HepG2 (cell line): ENCODE measurements at regions of chr1 and their contacts with region 1.

Region 1: DNA sequence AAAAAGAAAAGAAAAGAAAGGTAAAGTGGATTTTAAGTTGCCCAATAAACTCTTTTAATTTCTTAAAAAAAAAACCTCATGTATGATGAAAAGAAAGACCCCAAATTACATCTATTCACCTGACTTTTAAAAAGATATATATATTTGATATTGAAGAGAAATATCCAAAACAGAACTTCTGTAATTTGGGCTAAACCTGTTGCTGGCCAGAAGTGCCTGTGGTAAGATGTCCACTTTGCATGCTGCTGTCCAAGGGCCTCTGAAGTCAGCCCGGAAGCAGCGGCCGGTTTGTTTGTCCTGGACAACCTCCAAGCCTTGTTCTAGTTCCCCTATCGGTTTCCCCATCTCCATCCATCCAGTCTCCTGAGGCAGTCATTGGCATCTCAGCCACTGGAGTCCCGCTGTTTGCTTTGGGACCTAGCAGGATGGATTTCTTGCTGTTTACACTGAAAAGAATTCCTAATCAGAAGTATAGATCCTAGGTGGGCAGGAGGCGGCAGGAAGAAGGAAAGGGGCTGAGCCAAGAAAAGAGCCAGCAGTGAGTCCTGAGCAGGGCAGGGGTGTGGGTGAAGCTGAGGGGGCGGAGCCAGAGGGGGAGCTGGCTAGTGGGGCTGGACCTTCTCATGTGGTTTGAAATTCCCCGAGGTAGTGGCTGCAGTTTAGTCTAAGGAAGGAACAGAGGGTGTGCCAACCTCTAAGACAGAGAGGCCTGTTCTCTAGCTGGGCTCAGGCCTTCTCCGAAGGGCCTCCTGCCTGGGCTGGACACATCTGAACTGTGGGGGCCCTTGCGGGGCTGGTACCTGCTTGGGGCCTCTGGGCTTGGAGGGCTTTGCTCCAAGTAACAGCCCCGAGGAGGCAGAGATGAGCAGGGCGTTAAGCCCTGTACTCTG is 3.3 kb downstream of the NCMAP start:
- DNase-seq: peak; percentile 89
- ATAC-seq: peak; percentile 71
- H3K4me3 ChIP-seq: peak overlapping the region in 1 of 3 experiments; percentile 82; a peak in 1 of 6 replicates
- H3K27ac ChIP-seq: peak overlapping the region; percentile 59
- H3K4me1 ChIP-seq: peaks cover 60% of the 10 kb centered on the region
- H3K27me3 ChIP-seq: no peaks in the 10 kb centered on the region
- CTCF ChIP-seq: no peak
- EP300 ChIP-seq: peak in 1 of 2 experiments; percentile 66; a peak in 2 of 4 replicates
- POLR2A ChIP-seq: no peak
- RAD21 ChIP-seq: no peak

Region 2: GRCh38 chr1:24502709-24503058 is 56.5 kb before region 1 on chr1 and contains the start of gene RCAN3:
- CTCF ChIA-PET with region 1: no interaction called
- POLR2A ChIA-PET with region 1: no interaction called
- in situ Hi-C with region 1: no loop called
- intact Hi-C with region 1: loop called (anchors 5 kb)
- DNase-seq: peak; percentile 69
- ATAC-seq: peak; percentile 88
- H3K4me3 ChIP-seq: peak within 1 kb of the TSS; percentile 71 to 84 (median 79)
- H3K27ac ChIP-seq: peak within 1 kb of the TSS; percentile 93
- H3K4me1 ChIP-seq: peaks cover 47% of the 10 kb centered on the region
- H3K27me3 ChIP-seq: no peaks in the 10 kb centered on the region; a peak in 1 of 5 replicates
- CTCF ChIP-seq: no peak
- EP300 ChIP-seq: no peak
- POLR2A ChIP-seq: peak in 1 of 2 experiments; percentile 50; a peak in 2 of 4 replicates
- RAD21 ChIP-seq: peak; percentile 52
- total RNA-seq, gene RCAN3: 13.3 and 13.6 TPM in 2 replicates

Region 3: GRCh38 chr1:24635195-24635843 is 76.2 kb after region 1 on chr1:
- CTCF ChIA-PET with region 1: interaction called, 3 read pairs
- POLR2A ChIA-PET with region 1: no interaction called
- in situ Hi-C with region 1: no loop called
- intact Hi-C with region 1: loop called (anchors 5 kb)
- DNase-seq: peak; percentile 72
- ATAC-seq: peak; percentile 74
- H3K4me3 ChIP-seq: no peak overlapping the region
- H3K27ac ChIP-seq: no peak overlapping the region
- H3K4me1 ChIP-seq: peaks cover 35% of the 10 kb centered on the region
- H3K27me3 ChIP-seq: no peaks in the 10 kb centered on the region
- CTCF ChIP-seq: peak; percentile 85
- EP300 ChIP-seq: no peak
- POLR2A ChIP-seq: no peak
- RAD21 ChIP-seq: peak; percentile 72

Region 4: DNA sequence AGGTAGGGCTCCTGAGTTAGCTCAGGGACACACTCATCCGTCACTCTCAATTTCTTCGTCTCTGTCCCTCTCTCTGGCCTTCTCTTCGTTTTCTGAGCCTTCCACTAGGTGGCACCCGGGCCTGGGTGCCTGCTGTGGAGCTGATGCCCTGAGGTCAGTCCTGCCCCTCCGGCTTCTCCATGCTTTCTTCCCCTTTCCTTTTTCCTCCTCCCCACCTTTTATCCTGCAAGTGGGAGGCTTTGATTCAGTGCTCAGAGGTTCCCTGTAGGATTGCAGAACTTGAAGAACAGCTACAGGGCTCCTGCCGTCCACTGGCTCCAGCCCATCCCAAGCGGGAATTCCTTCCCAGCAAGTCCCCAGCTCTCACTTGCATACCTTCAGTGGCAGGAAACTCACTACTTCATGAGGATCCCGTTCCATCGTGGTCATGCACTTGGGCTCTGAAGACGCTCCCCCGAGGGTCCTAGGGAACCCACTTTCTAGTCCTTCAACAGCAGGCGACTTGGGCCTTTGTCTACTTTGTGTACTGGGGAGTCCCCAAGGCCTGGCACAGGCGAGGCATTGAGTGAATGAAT is 129.6 kb after region 1 on chr1:
- CTCF ChIA-PET with region 1: no interaction called
- POLR2A ChIA-PET with region 1: no interaction called
- in situ Hi-C with region 1: no loop called
- intact Hi-C with region 1: no loop called
- DNase-seq: peak; percentile 57
- ATAC-seq: peak; percentile 94
- H3K4me3 ChIP-seq: no peak overlapping the region
- H3K27ac ChIP-seq: no peak overlapping the region
- H3K4me1 ChIP-seq: peaks cover 23% of the 10 kb centered on the region
- H3K27me3 ChIP-seq: no peaks in the 10 kb centered on the region
- CTCF ChIP-seq: peak; percentile 94
- EP300 ChIP-seq: no peak
- POLR2A ChIP-seq: no peak
- RAD21 ChIP-seq: peak; percentile 87

Region 5: GRCh38 chr1:24857507-24858133 is 298.5 kb after region 1 on chr1:
- CTCF ChIA-PET with region 1: no interaction called
- POLR2A ChIA-PET with region 1: no interaction called
- in situ Hi-C with region 1: no loop called
- intact Hi-C with region 1: no loop called
- DNase-seq: no peak
- ATAC-seq: no peak
- H3K4me3 ChIP-seq: no peak overlapping the region
- H3K27ac ChIP-seq: no peak overlapping the region
- H3K4me1 ChIP-seq: peaks cover 46% of the 10 kb centered on the region
- H3K27me3 ChIP-seq: no peaks in the 10 kb centered on the region; a peak in 1 of 5 replicates
- CTCF ChIP-seq: peak; percentile 26; the same call in 1 of the 2 replicates
- EP300 ChIP-seq: no peak
- POLR2A ChIP-seq: no peak
- RAD21 ChIP-seq: no peak

Region 6: DNA sequence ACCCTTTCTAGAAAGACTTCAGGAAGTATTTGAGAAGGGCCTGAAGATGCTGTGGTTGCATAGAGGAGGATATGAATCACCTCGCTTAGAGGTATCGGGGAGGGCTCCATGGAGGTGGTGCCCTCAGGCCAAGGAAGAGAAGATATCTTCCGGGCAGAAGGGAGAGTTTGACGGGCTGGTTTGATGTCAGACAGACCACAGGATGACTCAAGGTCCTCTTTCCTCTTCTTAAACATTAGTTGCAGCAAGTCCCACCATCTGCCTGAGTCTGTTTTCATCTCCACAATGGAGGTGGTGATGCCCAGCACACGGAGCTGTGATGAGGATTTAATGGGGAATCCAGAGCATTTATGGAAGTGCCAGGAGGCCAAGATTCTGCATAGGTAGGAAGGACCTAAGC is 396.0 kb after region 1 on chr1:
- CTCF ChIA-PET with region 1: no interaction called
- POLR2A ChIA-PET with region 1: no interaction called
- in situ Hi-C with region 1: no loop called
- intact Hi-C with region 1: no loop called
- DNase-seq: no peak
- ATAC-seq: no peak
- H3K4me3 ChIP-seq: no peak overlapping the region
- H3K27ac ChIP-seq: no peak overlapping the region
- H3K4me1 ChIP-seq: peaks cover 8% of the 10 kb centered on the region
- H3K27me3 ChIP-seq: peaks cover 2 to 40% of the 10 kb centered on the region in 2 experiments; a peak in 3 of 5 replicates
- CTCF ChIP-seq: no peak
- EP300 ChIP-seq: no peak
- POLR2A ChIP-seq: no peak
- RAD21 ChIP-seq: no peak

Region 7: GRCh38 chr1:25642574-25643108 is 1083.5 kb after region 1 on chr1:
- CTCF ChIA-PET with region 1: no interaction called
- POLR2A ChIA-PET with region 1: no interaction called
- in situ Hi-C with region 1: no loop called
- intact Hi-C with region 1: no loop called
- DNase-seq: no peak
- ATAC-seq: no peak
- H3K4me3 ChIP-seq: no peak overlapping the region
- H3K27ac ChIP-seq: no peak overlapping the region
- H3K4me1 ChIP-seq: no peaks in the 10 kb centered on the region
- H3K27me3 ChIP-seq: peaks cover 1 to 30% of the 10 kb centered on the region in 2 experiments; a peak in 3 of 5 replicates
- CTCF ChIP-seq: no peak
- EP300 ChIP-seq: no peak
- POLR2A ChIP-seq: no peak
- RAD21 ChIP-seq: no peak